ENCODE measurements at regions of chr4 and their contacts with region 1.

Region 1: DNA sequence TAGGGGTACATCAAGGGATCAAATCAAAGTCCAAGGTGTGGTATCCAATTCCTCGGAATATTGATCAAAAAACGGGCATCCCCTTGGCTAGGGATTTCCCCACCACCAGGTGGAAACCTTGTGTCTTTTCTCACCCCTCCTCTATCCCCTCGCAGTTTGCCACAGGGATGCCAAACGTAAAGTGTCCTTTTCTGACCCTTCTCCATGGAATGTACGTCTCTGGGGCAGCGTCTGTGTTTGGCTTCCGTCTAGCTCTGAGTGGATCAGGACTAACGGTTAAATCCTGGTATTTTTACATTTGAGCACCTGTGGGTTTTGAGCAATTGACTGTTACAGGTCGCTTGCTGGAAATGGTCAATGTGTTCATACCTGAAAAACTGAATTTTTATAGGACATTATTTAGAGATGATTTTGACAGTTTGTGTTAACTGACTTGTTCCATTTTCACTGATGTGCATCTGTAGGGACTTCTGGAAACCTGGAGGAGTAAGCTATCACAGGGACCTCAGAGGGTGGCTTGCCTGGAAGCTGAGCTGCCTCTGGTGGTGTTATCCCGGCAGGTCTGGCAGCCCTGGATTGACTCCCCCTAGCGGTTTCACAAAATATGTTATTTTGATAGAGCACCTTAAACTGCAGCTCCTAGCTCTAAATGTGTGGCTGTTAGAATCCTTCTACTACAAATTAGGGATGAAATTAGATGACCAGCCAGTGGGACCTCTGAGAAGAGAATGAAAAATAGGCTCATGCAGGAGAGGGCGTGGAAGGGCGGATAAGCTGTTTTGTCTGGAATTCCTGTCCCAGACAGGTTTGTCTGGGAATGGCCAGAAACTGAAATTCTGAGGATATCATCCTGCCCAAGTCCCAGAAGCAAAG is 8.8 kb upstream of the MGST2 start:
- DNase-seq: peak; percentile 51
- H3K4me3 ChIP-seq: no peak overlapping the region
- H3K27ac ChIP-seq: no peak overlapping the region
- H3K27me3 ChIP-seq: no peaks in the 10 kb centered on the region
- CTCF ChIP-seq: peak; percentile 92

Region 2: GRCh38 chr4:139582044-139582443 is 74.8 kb before region 1 on chr4:
- CTCF ChIA-PET with region 1: interaction called, 53 read pairs
- POLR2A ChIA-PET with region 1: no interaction called
- DNase-seq: no peak
- H3K4me3 ChIP-seq: no peak overlapping the region
- H3K27ac ChIP-seq: no peak overlapping the region
- H3K27me3 ChIP-seq: peaks cover 16% of the 10 kb centered on the region
- CTCF ChIP-seq: peak; percentile 27; the same call in 1 of the 2 replicates

Region 3: DNA sequence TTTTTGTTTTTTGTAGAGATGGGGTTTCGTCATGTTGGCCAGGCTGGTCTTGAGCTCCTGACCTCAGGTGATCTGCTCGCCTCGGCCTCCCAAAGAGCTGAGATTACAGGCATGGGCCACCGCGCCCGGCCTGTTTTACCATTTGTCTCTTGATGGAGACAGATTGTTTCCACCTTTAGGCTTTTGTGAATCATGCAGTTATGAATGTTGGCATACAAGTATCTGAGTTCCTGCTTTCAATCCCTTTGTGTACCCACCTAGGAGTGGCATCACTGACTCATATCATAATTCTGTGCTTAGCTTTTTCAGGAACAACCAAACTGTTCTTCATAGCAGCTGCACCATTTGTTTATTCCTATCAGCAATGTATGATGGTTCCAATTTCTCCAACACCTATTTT is 11.4 kb before region 1 on chr4:
- CTCF ChIA-PET with region 1: interaction called, 11 read pairs
- POLR2A ChIA-PET with region 1: no interaction called
- DNase-seq: no peak
- H3K4me3 ChIP-seq: no peak overlapping the region
- H3K27ac ChIP-seq: no peak overlapping the region
- H3K27me3 ChIP-seq: no peaks in the 10 kb centered on the region
- CTCF ChIP-seq: no peak

Region 4: DNA sequence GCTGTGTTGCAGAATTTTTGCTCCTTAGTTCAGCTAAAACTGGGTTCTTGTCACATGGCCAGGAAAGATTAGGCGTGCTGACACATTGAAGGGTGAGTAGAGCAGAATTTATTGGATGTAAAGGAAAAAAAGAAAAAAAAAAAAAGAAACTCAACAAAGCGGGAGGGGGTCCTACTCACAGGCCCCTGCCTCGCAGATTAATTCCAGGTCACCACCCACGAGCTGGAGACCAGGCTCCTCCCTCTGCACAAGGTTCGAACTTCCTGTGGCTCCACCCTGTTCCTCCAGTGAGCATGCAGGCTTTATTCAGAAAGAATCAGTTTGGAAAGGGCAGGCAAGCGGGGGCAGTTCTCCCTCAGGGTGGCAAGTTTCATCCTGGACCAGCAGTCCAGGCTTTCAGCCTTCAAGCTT is 25.9 kb after region 1 on chr4:
- CTCF ChIA-PET with region 1: interaction called, 22 read pairs
- POLR2A ChIA-PET with region 1: interaction called, 4 read pairs
- DNase-seq: no peak
- H3K4me3 ChIP-seq: no peak overlapping the region
- H3K27ac ChIP-seq: peak overlapping the region; percentile 68
- H3K27me3 ChIP-seq: no peaks in the 10 kb centered on the region
- CTCF ChIP-seq: no peak

Region 5: DNA sequence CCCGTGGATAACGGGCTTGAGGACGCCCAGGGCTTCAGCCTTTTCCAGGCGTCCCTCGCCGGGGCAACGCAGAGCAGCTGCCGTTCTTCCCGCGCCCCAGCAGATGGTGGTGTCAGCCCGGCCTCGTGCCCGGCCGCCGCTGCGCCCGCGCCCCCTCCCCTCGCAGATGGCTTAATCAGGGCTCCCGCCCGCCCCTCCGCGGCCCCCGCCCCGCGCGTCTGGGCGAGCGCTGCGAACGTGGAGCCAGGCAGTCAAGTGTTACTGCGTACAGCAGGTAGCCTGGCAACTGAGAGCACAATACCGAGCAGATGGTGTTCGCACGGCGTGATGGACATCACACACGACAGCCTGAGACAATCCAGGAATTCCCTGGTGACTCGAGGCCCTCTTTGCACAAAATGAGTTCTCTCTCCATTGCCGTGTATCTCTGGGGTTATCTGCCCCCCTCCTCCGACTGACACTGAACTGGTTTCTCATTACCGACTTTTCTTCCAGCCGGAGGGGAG is 78.1 kb after region 1 on chr4:
- CTCF ChIA-PET with region 1: interaction called, 19 read pairs
- POLR2A ChIA-PET with region 1: no interaction called
- DNase-seq: no peak
- H3K4me3 ChIP-seq: peak overlapping the region; percentile 63
- H3K27ac ChIP-seq: peak overlapping the region; percentile 61
- H3K27me3 ChIP-seq: no peaks in the 10 kb centered on the region
- CTCF ChIP-seq: peak; percentile 63